ENCODE measurements at regions of chr14 and their contacts with region 1.

Region 1: DNA sequence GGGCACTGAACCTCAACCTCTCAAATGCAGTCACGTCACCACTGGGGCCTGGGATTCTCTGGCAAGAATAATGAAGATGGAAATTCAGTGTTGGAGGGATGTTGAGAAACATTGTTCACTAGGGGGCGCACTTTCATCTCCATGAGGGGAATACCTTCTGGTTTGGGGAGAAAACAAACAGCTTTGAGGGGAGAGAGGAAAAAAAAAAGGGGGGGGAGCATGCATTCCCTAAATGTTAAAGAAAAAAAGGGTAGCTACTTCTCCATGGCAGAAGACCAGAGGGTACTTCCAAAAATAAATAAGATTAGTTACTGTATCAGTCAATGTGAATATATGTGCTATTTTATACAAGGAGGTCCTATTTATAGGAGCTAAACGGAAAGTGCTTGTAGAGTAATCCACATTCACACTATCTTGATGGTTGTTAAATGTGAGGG is 5.8 kb upstream of the TBPL2 start:
- DNase-seq: peak; percentile 73
- ATAC-seq: peak; percentile 51
- H3K4me3 Mint-ChIP-seq: no peak overlapping the region
- H3K27ac Mint-ChIP-seq: no peak overlapping the region
- H3K4me1 Mint-ChIP-seq: peaks cover 25% of the 10 kb centered on the region
- H3K27me3 Mint-ChIP-seq: no peaks in the 10 kb centered on the region

Region 2: GRCh38 chr14:55404173-55404854 is 41.9 kb before region 1 on chr14:
- CTCF ChIA-PET with region 1: no interaction called
- POLR2A ChIA-PET with region 1: no interaction called
- intact Hi-C with region 1: no loop called
- DNase-seq: no peak
- ATAC-seq: peak; percentile 79
- H3K4me3 Mint-ChIP-seq: no peak overlapping the region
- H3K27ac Mint-ChIP-seq: peak overlapping the region; percentile 29
- H3K4me1 Mint-ChIP-seq: peaks cover 47% of the 10 kb centered on the region
- H3K27me3 Mint-ChIP-seq: no peaks in the 10 kb centered on the region

Region 3: DNA sequence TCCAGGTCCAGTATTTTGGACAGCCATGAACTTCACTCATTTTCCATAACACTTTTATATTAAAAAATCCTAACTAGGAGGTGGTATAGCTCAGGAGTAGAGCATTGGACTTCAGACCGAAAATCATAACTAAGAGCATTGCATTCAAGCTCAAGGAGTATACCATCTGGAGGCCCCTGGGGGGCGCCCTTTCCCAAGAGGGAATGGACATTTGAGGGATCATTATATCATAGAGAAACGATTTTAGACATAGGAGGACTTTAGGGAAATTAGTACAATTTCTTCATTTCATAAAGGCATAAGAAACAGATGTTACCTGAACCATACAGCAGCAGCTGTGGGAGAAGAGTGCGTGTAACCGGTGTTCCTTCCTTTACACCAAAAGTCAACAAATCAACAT is 29.4 kb before region 1 on chr14:
- CTCF ChIA-PET with region 1: interaction called, 11 read pairs
- POLR2A ChIA-PET with region 1: no interaction called
- intact Hi-C with region 1: no loop called
- DNase-seq: peak; percentile 66
- ATAC-seq: peak; percentile 67
- H3K4me3 Mint-ChIP-seq: no peak overlapping the region
- H3K27ac Mint-ChIP-seq: no peak overlapping the region
- H3K4me1 Mint-ChIP-seq: peaks cover 7% of the 10 kb centered on the region
- H3K27me3 Mint-ChIP-seq: no peaks in the 10 kb centered on the region

Region 4: DNA sequence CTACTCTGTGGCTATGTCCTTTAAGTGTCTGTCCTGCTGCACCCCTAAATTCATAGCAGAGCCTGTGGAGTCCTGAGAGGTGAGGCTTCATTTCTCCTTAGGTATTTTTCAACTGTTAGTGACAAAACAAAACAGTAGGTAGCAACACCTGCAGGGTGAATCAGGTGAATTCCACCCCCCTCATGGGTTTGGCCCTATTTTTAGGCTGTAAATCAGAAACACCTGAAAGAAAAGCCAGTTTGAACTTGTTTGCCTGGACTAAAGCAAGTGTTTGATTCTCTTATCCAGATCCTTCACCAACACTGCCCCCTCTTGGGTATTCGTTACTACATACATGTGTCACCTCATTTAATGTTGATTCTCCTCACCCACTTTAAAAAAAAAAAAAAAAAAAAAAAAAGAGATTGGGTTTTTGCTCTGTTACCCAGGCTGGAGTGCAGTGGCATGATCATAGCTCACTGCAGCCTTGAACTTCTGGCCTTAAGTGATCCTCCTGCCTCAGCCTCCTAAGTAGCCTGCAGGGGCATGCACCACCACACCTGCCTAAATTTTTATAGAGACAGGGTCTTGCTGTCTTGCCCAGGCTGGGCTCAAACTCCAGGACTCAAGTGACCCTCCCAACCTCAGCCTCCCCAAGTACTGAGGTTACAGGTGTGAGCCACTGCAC is 16.1 kb before region 1 on chr14:
- CTCF ChIA-PET with region 1: interaction called, 45 read pairs
- POLR2A ChIA-PET with region 1: no interaction called
- intact Hi-C with region 1: no loop called
- DNase-seq: peak; percentile 54
- ATAC-seq: peak; percentile 93
- H3K4me3 Mint-ChIP-seq: no peak overlapping the region
- H3K27ac Mint-ChIP-seq: peak overlapping the region; percentile 65
- H3K4me1 Mint-ChIP-seq: peaks cover 30% of the 10 kb centered on the region
- H3K27me3 Mint-ChIP-seq: no peaks in the 10 kb centered on the region

Region 5: DNA sequence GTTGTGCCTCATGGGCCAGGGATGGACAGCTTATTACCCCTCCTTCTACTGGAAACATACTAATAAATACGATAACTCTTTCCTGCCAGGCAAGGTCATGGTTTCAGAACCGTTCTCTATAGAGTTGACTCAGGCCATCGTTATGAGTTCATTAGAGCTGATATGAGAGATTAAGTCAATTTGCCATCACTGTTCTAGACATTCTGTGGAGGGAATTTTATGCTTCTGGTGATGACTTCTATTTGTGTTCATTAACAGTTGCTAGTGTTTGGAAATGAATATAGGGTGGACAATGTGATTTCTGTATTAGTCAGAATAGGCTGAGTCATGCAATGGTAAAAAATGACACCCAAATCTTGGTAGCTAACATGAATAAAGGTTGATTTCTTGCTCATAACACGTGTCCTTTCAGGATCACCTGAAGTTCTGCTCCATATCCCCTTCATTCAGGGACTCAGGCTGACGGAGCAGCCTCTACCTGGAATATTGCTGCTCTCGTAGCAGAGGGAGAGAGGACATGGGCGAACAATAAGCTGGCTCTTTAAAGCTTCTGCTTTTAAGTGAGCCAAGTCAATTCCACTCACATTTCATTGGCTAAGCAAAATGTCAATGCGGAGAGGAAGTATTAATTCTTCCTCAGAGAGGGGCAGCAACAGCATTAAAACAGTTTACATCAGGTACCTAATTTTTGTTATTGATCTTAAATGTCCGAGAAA is 12.7 kb after region 1 on chr14:
- CTCF ChIA-PET with region 1: interaction called, 19 read pairs
- POLR2A ChIA-PET with region 1: no interaction called
- intact Hi-C with region 1: no loop called
- DNase-seq: no peak
- ATAC-seq: peak; percentile 84
- H3K4me3 Mint-ChIP-seq: no peak overlapping the region
- H3K27ac Mint-ChIP-seq: no peak overlapping the region
- H3K4me1 Mint-ChIP-seq: peaks cover 18% of the 10 kb centered on the region
- H3K27me3 Mint-ChIP-seq: peaks cover 8% of the 10 kb centered on the region

Region 6: DNA sequence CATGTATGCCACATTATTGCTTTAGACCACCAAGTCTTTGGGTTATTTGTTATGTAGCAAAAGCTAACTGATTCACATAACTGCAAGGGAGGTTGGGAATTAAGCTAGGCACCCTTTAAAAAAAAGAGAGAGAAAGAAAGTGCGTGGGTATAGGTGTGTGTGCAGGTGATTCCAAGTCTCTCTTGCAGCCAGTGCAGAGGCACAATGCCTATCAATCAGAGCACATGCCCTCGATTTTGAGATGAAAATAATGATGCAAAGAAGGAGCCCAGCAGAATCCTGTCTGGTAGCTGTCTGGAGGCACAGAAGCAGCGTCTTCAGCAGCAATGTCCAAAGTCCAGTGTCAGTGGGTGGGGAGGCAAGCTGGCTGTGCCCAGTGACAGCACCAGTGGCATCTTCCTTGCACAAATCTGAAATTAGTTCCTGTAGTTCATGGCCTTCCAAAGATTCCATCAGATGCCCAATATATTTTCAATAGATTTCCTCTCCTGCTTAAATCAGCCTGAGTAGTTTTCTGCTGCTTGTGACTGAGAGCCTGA is 56.6 kb after region 1 on chr14:
- CTCF ChIA-PET with region 1: no interaction called
- POLR2A ChIA-PET with region 1: no interaction called
- intact Hi-C with region 1: no loop called
- DNase-seq: no peak
- ATAC-seq: no peak
- H3K4me3 Mint-ChIP-seq: no peak overlapping the region
- H3K27ac Mint-ChIP-seq: no peak overlapping the region
- H3K4me1 Mint-ChIP-seq: no peaks in the 10 kb centered on the region
- H3K27me3 Mint-ChIP-seq: peaks cover 10% of the 10 kb centered on the region

Region 7: GRCh38 chr14:55665067-55665675 is 218.9 kb after region 1 on chr14:
- CTCF ChIA-PET with region 1: interaction called, 4 read pairs
- POLR2A ChIA-PET with region 1: no interaction called
- intact Hi-C with region 1: loop called (anchors 10 kb)
- DNase-seq: no peak
- ATAC-seq: peak; percentile 44
- H3K4me3 Mint-ChIP-seq: no peak overlapping the region
- H3K27ac Mint-ChIP-seq: peak overlapping the region; percentile 48
- H3K4me1 Mint-ChIP-seq: peaks cover 20% of the 10 kb centered on the region
- H3K27me3 Mint-ChIP-seq: no peaks in the 10 kb centered on the region

Region 8: GRCh38 chr14:56339855-56340701 is 893.8 kb after region 1 on chr14:
- CTCF ChIA-PET with region 1: no interaction called
- POLR2A ChIA-PET with region 1: no interaction called
- intact Hi-C with region 1: loop called in 1 of 2 experiments (anchors 2 kb)
- DNase-seq: peak; percentile 77
- ATAC-seq: peak; percentile 73
- H3K4me3 Mint-ChIP-seq: no peak overlapping the region
- H3K27ac Mint-ChIP-seq: no peak overlapping the region
- H3K4me1 Mint-ChIP-seq: peaks cover 3% of the 10 kb centered on the region
- H3K27me3 Mint-ChIP-seq: no peaks in the 10 kb centered on the region

Region 9: GRCh38 chr14:56422703-56423213 is 976.5 kb after region 1 on chr14:
- CTCF ChIA-PET with region 1: no interaction called
- POLR2A ChIA-PET with region 1: no interaction called
- intact Hi-C with region 1: loop called in 1 of 2 experiments (anchors 2 kb)
- DNase-seq: peak; percentile 24
- ATAC-seq: peak; percentile 53
- H3K4me3 Mint-ChIP-seq: no peak overlapping the region
- H3K27ac Mint-ChIP-seq: no peak overlapping the region
- H3K4me1 Mint-ChIP-seq: no peaks in the 10 kb centered on the region
- H3K27me3 Mint-ChIP-seq: peaks cover 2% of the 10 kb centered on the region